Colonic mucosa (tissue), 4 donors: ENCODE measurements at regions of chr4 and their contacts with region 1.

Region 1: GRCh38 chr4:48141048-48141447 is 7.0 kb upstream of the TXK start:
- DNase-seq: no peak
- H3K4me3 ChIP-seq: no peak overlapping the region
- H3K27ac ChIP-seq: no peak overlapping the region
- H3K4me1 ChIP-seq: no peaks in the 10 kb centered on the region
- H3K27me3 ChIP-seq: no peaks in the 10 kb centered on the region
- CTCF ChIP-seq: peak; percentile 55

Region 2: DNA sequence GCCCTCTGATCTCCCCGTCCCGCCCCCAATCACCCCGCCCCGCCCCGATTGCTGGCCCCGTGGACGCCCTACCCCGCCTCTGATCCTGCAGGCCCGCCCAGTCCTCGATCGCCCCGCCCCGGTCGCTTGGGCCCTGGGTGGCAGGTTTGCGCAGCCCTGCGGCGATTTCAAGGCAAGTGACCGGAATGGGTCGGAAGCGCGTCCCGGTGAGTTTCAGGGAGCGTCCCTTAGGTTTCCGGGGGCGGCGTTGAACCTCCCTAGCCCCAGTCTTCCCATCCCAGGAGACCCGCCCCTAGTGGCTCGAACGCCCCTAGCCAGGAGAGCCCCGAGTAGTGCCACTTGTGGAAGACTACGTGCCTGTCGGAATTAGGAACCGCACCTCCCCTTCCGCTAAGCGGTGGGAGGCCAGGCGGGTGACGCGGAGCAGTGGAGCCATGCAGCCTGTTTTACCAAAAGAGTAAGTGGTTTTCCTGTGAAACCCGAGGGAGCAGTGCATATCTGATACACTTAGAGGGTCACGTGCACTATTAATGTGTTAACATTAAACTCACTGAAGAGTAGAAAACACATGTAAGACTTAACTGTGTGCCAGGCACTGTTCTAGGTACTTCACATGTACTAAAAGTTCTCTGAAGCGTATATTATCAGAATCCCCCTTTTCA is 128.9 kb after region 1 on chr4:
- intact Hi-C with region 1: loop called (anchors 10 kb)
- DNase-seq: peak; percentile 97
- H3K4me3 ChIP-seq: peak overlapping the region; percentile 71
- H3K27ac ChIP-seq: peak overlapping the region; percentile 95
- H3K4me1 ChIP-seq: no peaks in the 10 kb centered on the region
- H3K27me3 ChIP-seq: no peaks in the 10 kb centered on the region
- CTCF ChIP-seq: no peak